ENCODE measurements at regions of chr10 and their contacts with region 1.

Region 1: GRCh38 chr10:29304264-29305030 is 15.6 kb downstream of the LYZL1 start:
- DNase-seq: peak; percentile 60 to 71 (median 68)
- ATAC-seq: peak; percentile 78
- H3K4me3 ChIP-seq: no peak overlapping the region
- H3K27ac ChIP-seq: peak overlapping the region in 1 of 4 donors; percentile 22
- H3K4me1 ChIP-seq: no peaks in the 10 kb centered on the region
- H3K27me3 ChIP-seq: no peaks in the 10 kb centered on the region
- CTCF ChIP-seq: peak; percentile 49 to 87 (median 81)
- POLR2A ChIP-seq: no peak

Region 2: GRCh38 chr10:28628184-28628893 is 676.1 kb before region 1 on chr10:
- intact Hi-C with region 1: loop called (anchors 2 kb)
- DNase-seq: peak; percentile 82 to 87 (median 82)
- ATAC-seq: peak; percentile 87
- H3K4me3 ChIP-seq: no peak overlapping the region
- H3K27ac ChIP-seq: no peak overlapping the region
- H3K4me1 ChIP-seq: no peaks in the 10 kb centered on the region
- H3K27me3 ChIP-seq: no peaks in the 10 kb centered on the region
- CTCF ChIP-seq: peak; percentile 78 to 93 (median 80)
- POLR2A ChIP-seq: no peak

Region 3: GRCh38 chr10:28663576-28664313 is 640.7 kb before region 1 on chr10:
- intact Hi-C with region 1: loop called (anchors 5 kb)
- DNase-seq: peak; percentile 87 to 88 (median 88)
- ATAC-seq: peak; percentile 96
- H3K4me3 ChIP-seq: no peak overlapping the region
- H3K27ac ChIP-seq: peak overlapping the region in 1 of 4 donors; percentile 43
- H3K4me1 ChIP-seq: peaks cover 14% of the 10 kb centered on the region
- H3K27me3 ChIP-seq: peaks cover 0 to 16% of the 10 kb centered on the region in 2 donors
- CTCF ChIP-seq: peak; percentile 89 to 98 (median 96)
- POLR2A ChIP-seq: no peak

Region 4: GRCh38 chr10:29174335-29174734 is 130.1 kb before region 1 on chr10:
- intact Hi-C with region 1: no loop called
- DNase-seq: no peak
- ATAC-seq: no peak
- H3K4me3 ChIP-seq: no peak overlapping the region
- H3K27ac ChIP-seq: no peak overlapping the region
- H3K4me1 ChIP-seq: no peaks in the 10 kb centered on the region
- H3K27me3 ChIP-seq: no peaks in the 10 kb centered on the region
- CTCF ChIP-seq: no peak
- POLR2A ChIP-seq: no peak